Dorsolateral prefrontal cortex (tissue), 120 donors: ENCODE measurements at regions of chr4 and their contacts with region 1.

Region 1: DNA sequence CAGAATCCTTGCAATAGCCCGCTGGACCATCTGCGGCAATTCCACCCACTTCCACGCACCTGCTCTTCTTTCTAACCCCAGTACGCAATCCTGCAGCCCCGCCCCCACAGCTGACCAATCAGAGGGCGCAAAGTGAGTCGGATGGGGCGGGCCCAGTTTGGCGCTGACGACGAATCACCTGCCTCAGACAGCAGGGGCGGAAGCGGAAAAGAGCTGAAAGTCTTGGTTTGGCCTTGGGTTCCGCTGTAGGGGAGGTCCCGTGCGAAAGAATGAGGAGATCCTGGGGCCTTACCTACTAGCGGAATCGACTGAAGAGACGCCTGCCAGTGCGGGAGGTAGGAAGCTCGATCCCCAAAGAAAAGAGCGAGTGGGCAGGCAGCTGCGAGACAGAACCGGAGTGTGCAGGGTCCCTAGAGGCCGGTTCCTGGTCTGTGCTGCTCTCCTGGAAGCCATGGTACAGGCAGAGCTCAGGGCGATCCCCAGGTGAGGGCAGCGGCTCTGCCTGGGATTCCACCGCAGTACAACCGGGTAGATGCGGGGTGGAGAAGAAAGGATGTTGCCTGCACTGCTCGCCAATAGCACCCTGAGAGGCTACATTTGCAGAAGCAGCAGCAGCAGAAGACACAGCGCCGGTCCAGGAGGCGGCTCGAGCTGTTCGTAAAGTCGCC is at the start of gene TMEM184C:
- DNase-seq: peak; percentile 97 to 99 (median 98)
- H3K4me3 ChIP-seq: peak within 1 kb of the TSS; percentile 62 to 99 (median 90)
- H3K27ac ChIP-seq: peak within 1 kb of the TSS in 57 of 59 donors; percentile 12 to 92 (median 78)
- H3K27me3 ChIP-seq: no peaks in the 10 kb centered on the region
- CTCF ChIP-seq: peak in 28 of 56 donors; percentile 4 to 52 (median 30)
- total RNA-seq, gene TMEM184C: 24.9 to 69.1 (median 35.0) TPM

Region 2: GRCh38 chr4:147123146-147123545 is 494.2 kb before region 1 on chr4:
- intact Hi-C with region 1: no loop called
- DNase-seq: no peak
- H3K4me3 ChIP-seq: no peak overlapping the region
- H3K27ac ChIP-seq: peak overlapping the region in 1 of 59 donors; percentile 9
- H3K27me3 ChIP-seq: no peaks in the 10 kb centered on the region
- CTCF ChIP-seq: no peak

Region 3: GRCh38 chr4:147539959-147540358 is 77.3 kb before region 1 on chr4:
- intact Hi-C with region 1: no loop called
- DNase-seq: no peak
- H3K4me3 ChIP-seq: no peak overlapping the region
- H3K27ac ChIP-seq: no peak overlapping the region
- H3K27me3 ChIP-seq: no peaks in the 10 kb centered on the region
- CTCF ChIP-seq: no peak

Region 4: GRCh38 chr4:147683717-147684700 is 66.7 kb after region 1 on chr4 and contains the start of gene PRMT9:
- intact Hi-C with region 1: loop called in 1 of 2 experiments (anchors 5 kb)
- DNase-seq: peak; percentile 78 to 95 (median 90)
- H3K4me3 ChIP-seq: peak within 1 kb of the TSS; percentile 40 to 96 (median 85)
- H3K27ac ChIP-seq: peak within 1 kb of the TSS; percentile 28 to 95 (median 84)
- H3K27me3 ChIP-seq: no peaks in the 10 kb centered on the region
- CTCF ChIP-seq: peak in 15 of 56 donors; percentile 6 to 44 (median 19)
- total RNA-seq, gene PRMT9: 6.9 to 20.4 (median 14.3) TPM